ENCODE measurements at regions of chr5 and their contacts with region 1.

Region 1: DNA sequence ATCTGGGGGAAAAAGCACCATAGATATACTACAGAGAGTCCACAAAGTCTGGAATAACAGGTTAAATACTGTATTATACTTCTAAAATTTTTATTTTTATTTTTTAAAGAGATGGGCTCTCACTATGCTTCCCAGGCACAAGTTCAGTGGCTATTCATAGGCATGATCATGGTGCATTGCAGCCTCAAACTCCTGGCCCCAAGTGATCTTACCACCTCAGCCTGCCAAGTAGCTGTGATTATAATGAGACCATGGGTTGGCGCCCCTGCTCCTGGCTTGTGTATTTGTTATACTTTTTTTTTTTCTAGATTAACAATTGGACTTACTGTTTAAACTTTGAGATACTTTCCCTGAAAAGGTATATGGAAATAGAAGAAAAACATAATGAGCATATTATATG is 25.9 kb downstream of the ERBIN start:
- DNase-seq: no peak
- H3K4me3 Mint-ChIP-seq: no peak overlapping the region
- H3K27ac Mint-ChIP-seq: no peak overlapping the region
- H3K4me1 Mint-ChIP-seq: no peaks in the 10 kb centered on the region
- H3K27me3 Mint-ChIP-seq: no peaks in the 10 kb centered on the region

Region 2: DNA sequence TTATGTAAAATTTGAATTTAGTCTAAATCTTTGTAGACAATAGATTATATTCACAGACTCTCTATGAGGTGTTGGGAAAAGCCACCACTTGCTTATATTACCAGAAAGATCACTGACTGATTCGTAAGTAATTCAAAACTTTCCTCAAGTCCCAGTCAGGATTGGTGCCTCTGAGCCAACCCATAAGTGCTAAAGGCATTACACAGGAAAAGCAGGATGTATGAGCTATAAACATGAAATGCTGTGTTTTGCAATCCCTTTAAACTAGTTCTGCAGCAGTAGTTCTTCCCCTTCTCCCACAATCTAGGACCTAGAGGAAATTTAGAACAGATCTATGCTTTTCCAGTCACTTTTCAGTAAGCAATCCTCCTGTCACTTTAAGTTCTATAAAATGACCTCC is 279.5 kb before region 1 on chr5:
- intact Hi-C with region 1: no loop called
- DNase-seq: no peak
- H3K4me3 Mint-ChIP-seq: no peak overlapping the region
- H3K27ac Mint-ChIP-seq: no peak overlapping the region
- H3K4me1 Mint-ChIP-seq: peaks cover 12% of the 10 kb centered on the region
- H3K27me3 Mint-ChIP-seq: no peaks in the 10 kb centered on the region

Region 3: GRCh38 chr5:65986050-65986451 is 33.8 kb after region 1 on chr5:
- intact Hi-C with region 1: loop called (anchors 1 kb)
- DNase-seq: no peak
- H3K4me3 Mint-ChIP-seq: no peak overlapping the region
- H3K27ac Mint-ChIP-seq: no peak overlapping the region
- H3K4me1 Mint-ChIP-seq: peaks cover 11% of the 10 kb centered on the region
- H3K27me3 Mint-ChIP-seq: no peaks in the 10 kb centered on the region

Region 4: DNA sequence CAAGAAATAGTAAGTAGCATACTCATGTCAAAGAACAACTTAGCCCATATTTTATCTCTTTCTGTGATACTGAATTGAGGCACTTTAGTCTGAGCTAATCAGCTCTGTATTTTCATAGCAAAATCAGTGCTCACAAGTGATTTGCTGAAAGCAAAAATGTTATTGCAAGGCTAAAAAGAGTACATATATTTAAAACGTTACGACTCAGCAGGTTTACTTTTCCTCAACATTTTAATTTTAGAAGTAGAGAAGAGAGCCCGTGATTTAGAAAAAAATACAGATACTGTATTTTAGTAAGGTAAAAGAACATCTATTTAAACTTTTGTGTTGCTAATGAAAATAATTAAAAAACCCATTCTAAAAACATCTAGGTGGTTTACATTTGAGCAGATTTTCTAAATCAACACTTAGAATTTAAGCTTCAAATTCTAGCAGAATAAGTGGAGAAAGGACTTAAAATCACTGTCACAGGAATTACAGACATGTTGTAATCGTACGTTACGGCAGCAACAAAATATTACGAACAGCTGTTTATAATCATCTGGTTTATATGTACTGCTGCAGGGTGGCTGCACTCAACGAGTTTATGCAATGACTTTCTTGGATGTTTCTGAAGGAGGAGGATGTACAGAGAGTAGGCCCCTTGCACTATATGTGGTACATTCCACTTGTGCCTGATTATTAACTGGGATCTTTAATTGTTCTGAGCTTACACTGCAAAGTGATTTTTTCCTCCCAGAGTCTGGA is 212.0 kb after region 1 on chr5:
- intact Hi-C with region 1: no loop called
- DNase-seq: no peak
- H3K4me3 Mint-ChIP-seq: no peak overlapping the region
- H3K27ac Mint-ChIP-seq: no peak overlapping the region
- H3K4me1 Mint-ChIP-seq: peaks cover 12% of the 10 kb centered on the region
- H3K27me3 Mint-ChIP-seq: no peaks in the 10 kb centered on the region